Caco-2 (cell line): ENCODE measurements at regions of chr2 and their contacts with region 1.

Region 1: DNA sequence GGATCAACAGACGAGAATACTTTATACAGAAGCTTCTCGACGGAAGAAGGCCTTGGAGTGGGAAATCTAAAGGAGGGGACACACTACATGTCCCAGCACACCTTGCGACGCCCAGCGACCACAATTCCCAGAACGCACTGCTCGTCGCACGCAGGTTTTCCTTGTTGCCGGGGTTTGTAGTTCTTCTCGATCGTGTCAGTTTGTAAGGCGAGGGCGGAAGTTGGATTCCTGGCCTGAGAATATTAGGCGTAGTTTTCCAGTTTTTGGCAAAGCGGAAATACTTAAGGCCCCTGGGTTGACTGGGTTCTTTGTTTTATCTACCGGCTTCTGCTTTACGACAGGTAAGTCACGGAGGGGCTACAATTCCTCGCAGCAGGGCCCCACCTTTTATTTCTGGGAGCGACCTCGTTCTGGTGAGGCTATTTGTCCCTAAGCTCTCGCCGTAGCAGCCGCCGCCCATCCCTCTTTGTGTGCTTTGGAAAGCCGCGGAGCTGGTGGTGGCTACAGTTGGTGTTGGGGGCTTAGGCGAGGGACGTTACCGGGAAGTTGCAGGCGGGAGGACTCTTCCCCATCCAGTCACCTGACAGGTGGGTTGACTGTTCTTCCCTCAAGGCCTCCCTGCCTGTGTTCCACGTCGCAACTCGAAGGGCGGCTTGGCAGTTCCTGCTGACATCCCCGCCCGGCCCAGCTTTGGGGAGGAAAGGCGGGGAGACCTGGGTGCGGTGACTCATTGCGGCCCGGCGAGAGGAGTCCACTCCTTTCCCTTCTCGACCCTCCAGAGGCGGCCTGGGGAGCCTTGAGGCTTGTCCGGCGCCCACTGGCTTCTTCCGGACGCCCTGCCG is at the start of gene DYNC1I2:
- DNase-seq: peak; percentile 88 to 93
- H3K4me3 ChIP-seq: peak within 1 kb of the TSS; percentile 89
- H3K4me3 Mint-ChIP-seq: peak within 1 kb of the TSS; percentile 98
- H3K27ac Mint-ChIP-seq: peak within 1 kb of the TSS; percentile 94
- H3K4me1 ChIP-seq: no peaks in the 10 kb centered on the region; the same call in 1 of the 2 replicates
- H3K4me1 Mint-ChIP-seq: peaks cover 7% of the 10 kb centered on the region
- H3K27me3 ChIP-seq: no peaks in the 10 kb centered on the region
- H3K27me3 Mint-ChIP-seq: no peaks in the 10 kb centered on the region
- CTCF ChIP-seq: no peak
- total RNA-seq, gene DYNC1I2: 62.9 and 69.6 TPM in 2 replicates

Region 2: GRCh38 chr2:171598713-171599319 is 88.7 kb before region 1 on chr2:
- CTCF ChIA-PET with region 1: no interaction called
- POLR2A ChIA-PET with region 1: no interaction called
- intact Hi-C with region 1: loop called (anchors 5 kb)
- DNase-seq: peak; percentile 60 to 68
- H3K4me3 ChIP-seq: no peak overlapping the region
- H3K4me3 Mint-ChIP-seq: no peak overlapping the region
- H3K27ac Mint-ChIP-seq: no peak overlapping the region
- H3K4me1 ChIP-seq: no peaks in the 10 kb centered on the region
- H3K4me1 Mint-ChIP-seq: peaks cover 6% of the 10 kb centered on the region
- H3K27me3 ChIP-seq: no peaks in the 10 kb centered on the region
- H3K27me3 Mint-ChIP-seq: peaks cover 10% of the 10 kb centered on the region
- CTCF ChIP-seq: peak; percentile 80 to 85

Region 3: GRCh38 chr2:171771463-171771862 is 84.0 kb after region 1 on chr2:
- CTCF ChIA-PET with region 1: no interaction called
- POLR2A ChIA-PET with region 1: no interaction called
- intact Hi-C with region 1: no loop called
- DNase-seq: no peak
- H3K4me3 ChIP-seq: no peak overlapping the region
- H3K4me3 Mint-ChIP-seq: no peak overlapping the region
- H3K27ac Mint-ChIP-seq: no peak overlapping the region
- H3K4me1 ChIP-seq: no peaks in the 10 kb centered on the region
- H3K4me1 Mint-ChIP-seq: no peaks in the 10 kb centered on the region
- H3K27me3 ChIP-seq: no peaks in the 10 kb centered on the region
- H3K27me3 Mint-ChIP-seq: no peaks in the 10 kb centered on the region
- CTCF ChIP-seq: no peak